ENCODE measurements at regions of chr4 and their contacts with region 1.

Region 1: DNA sequence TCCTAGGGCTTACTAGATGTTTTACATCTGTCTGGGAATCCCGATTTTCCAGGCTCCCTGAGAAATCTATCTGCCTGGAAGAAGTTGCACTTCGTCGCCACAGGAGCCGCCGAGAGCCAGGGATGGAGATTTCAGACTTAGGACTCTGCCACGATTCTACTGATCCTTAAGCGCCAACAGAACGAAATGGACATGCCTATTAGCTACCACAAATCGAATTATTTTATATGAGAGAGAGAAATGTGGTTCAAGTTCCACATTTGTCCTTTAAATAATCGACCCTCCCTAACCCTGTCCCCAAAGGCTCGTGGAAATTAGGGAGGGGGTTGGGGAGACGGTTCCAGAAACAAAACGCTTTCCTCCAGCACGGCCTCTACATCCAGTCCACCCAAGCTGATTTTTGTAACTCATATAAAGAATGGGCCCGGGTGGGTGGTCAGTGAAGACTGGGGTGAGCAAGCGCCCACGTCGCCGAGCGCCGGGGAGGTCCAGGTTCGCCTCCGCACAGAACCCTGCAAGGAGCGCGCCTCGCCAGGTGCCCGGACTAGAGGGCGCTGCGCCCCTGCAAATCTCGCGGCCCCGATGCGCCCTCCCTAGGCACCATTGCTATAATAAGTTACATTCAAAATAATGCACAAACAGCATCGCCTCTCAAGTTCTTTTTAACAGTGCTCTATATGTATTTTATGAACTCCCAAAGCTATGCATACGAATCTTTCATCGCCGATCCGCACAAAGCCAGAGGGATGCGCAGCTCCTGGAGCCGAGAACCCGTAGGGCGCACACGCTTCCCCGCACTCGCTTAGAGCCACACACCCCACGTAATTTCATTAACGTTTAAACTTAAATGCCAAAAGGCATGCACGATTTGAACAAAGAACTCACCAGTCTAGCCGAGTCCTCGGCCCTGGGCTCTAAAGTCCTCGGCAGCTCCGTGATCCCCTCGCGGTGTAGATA is 2.1 kb upstream of the FAT1 start:
- DNase-seq: peak; percentile 83
- H3K4me3 Mint-ChIP-seq: peak overlapping the region; percentile 93
- H3K27ac Mint-ChIP-seq: peak overlapping the region; percentile 93
- H3K4me1 Mint-ChIP-seq: peaks cover 30% of the 10 kb centered on the region
- H3K27me3 Mint-ChIP-seq: no peaks in the 10 kb centered on the region
- CTCF ChIP-seq: peak; percentile 75

Region 2: DNA sequence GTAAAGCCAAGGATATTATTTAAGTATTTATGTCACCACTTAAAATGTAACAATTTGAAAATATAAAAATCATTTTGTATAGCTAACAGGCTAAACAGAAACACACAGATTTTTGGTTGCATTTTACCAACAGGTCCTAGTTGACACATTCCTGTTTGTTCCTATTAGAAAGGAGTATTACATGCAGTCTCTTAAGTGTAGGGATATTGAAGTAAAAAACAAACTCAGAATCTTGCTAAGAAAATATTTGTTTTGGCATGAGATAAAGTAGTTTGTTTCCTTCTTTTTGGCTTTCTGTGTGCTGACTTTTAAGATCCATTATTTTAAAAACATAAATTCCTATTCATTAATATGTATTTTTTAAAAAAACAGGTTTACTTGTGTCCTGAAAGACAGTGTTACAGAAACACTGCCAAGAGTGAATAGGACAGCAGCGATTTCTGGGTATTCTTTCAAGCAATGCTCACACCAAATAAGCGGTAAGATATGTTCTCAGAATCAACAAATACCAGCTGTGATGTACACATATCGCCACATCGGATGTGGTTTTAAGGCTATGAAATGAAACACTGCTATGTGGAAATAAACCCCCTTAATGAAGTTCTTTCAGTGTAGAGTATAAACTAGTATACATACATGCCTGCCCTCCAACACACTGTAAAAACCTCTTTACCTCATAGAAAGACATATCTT is 452.9 kb before region 1 on chr4:
- CTCF ChIA-PET with region 1: no interaction called
- POLR2A ChIA-PET with region 1: no interaction called
- intact Hi-C with region 1: no loop called
- DNase-seq: no peak
- H3K4me3 Mint-ChIP-seq: no peak overlapping the region
- H3K27ac Mint-ChIP-seq: no peak overlapping the region
- H3K4me1 Mint-ChIP-seq: no peaks in the 10 kb centered on the region
- H3K27me3 Mint-ChIP-seq: no peaks in the 10 kb centered on the region
- CTCF ChIP-seq: no peak

Region 3: GRCh38 chr4:186283311-186283710 is 442.4 kb before region 1 on chr4:
- CTCF ChIA-PET with region 1: no interaction called
- POLR2A ChIA-PET with region 1: no interaction called
- intact Hi-C with region 1: no loop called
- DNase-seq: no peak
- H3K4me3 Mint-ChIP-seq: no peak overlapping the region
- H3K27ac Mint-ChIP-seq: no peak overlapping the region
- H3K4me1 Mint-ChIP-seq: no peaks in the 10 kb centered on the region
- H3K27me3 Mint-ChIP-seq: no peaks in the 10 kb centered on the region
- CTCF ChIP-seq: no peak

Region 4: DNA sequence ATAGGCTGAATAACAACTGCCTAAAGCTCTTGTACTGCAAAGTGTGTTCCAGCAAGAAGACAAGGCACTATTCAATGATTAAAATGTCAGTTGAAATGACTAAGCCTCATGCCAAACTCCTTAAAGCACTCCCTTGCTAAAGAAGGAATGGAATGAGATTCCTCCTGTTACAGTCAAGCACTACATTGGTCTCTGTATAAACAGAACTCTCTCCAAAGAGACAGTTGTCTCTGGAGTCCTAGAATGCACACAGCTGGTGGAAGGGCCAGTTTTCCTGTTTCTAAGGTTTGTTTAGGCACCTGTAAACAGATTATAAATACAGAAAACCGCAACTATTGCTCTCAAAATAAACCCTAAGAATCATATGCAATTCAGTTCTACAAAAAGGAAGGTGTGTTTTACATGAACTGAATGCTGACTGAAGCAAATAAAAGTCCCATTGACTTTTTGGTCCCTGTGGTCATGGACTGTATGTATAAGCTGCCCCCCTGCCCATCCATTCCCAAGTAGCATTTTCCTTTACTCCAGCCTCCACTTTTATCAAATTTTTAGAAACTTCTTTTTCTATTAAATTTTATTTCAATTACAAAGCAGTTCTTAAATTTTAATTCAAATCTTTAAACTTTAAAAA is 49.1 kb before region 1 on chr4:
- CTCF ChIA-PET with region 1: interaction called, 7 read pairs
- POLR2A ChIA-PET with region 1: interaction called, 40 read pairs
- intact Hi-C with region 1: no loop called
- DNase-seq: peak; percentile 47
- H3K4me3 Mint-ChIP-seq: no peak overlapping the region
- H3K27ac Mint-ChIP-seq: peak overlapping the region; percentile 79
- H3K4me1 Mint-ChIP-seq: peaks cover 14% of the 10 kb centered on the region
- H3K27me3 Mint-ChIP-seq: no peaks in the 10 kb centered on the region
- CTCF ChIP-seq: no peak

Region 5: DNA sequence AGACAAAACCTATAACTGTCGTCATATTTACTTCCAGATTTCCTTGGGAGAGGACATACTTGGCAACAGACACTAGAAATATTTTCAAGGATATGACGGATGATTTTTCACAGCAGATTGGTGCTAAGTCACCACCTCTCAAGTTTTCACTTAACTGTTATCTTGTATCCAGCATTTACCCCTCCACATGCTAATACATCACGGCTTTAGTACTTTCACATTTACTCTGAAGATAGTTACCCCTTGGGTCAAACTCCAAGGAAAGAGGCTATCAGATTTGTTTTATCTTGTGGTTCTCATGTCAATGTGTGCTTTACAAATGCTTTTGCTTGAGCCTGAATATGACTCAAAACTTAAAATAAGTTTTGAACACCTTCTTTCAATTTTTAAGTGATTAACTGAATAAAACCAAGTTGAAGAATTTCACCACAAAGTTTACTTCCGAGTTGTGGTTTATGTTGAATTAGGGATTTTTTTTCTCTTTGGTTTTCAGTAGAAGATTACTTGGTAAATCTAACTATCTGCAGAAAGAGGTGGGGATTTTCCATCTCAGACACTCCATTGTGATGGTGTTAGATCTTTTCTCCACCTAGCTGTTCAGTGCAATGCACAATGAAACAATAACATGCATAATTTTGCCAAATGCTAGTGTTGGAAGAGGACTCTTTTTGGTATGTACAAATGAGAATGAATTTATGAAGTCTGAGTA is 73.4 kb after region 1 on chr4:
- CTCF ChIA-PET with region 1: no interaction called
- POLR2A ChIA-PET with region 1: no interaction called
- intact Hi-C with region 1: no loop called
- DNase-seq: no peak
- H3K4me3 Mint-ChIP-seq: no peak overlapping the region
- H3K27ac Mint-ChIP-seq: no peak overlapping the region
- H3K4me1 Mint-ChIP-seq: no peaks in the 10 kb centered on the region
- H3K27me3 Mint-ChIP-seq: no peaks in the 10 kb centered on the region
- CTCF ChIP-seq: no peak

Region 6: DNA sequence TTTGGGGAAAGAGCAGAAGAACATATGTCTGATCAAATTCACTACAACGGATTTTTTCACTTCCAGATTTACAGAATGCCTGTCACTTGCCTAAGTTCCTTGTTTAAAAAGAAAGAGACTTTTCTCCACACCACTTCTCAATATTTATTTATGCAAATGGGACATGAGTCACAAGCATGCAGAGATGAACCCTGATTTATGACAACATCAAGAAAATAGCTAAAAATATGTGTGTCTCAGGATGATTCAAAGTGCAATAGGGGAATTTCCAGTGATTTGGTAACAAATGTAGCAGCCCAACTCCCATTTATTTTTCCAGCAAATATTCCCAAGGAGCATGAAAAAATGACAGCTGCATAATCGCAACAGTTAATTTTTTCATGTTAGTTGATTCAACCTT is 178.4 kb after region 1 on chr4:
- CTCF ChIA-PET with region 1: interaction called, 3 read pairs
- POLR2A ChIA-PET with region 1: interaction called, 7 read pairs
- intact Hi-C with region 1: loop called (anchors 5 kb)
- DNase-seq: peak; percentile 78
- H3K4me3 Mint-ChIP-seq: no peak overlapping the region
- H3K27ac Mint-ChIP-seq: peak overlapping the region; percentile 36
- H3K4me1 Mint-ChIP-seq: peaks cover 22% of the 10 kb centered on the region
- H3K27me3 Mint-ChIP-seq: no peaks in the 10 kb centered on the region
- CTCF ChIP-seq: no peak

Region 7: DNA sequence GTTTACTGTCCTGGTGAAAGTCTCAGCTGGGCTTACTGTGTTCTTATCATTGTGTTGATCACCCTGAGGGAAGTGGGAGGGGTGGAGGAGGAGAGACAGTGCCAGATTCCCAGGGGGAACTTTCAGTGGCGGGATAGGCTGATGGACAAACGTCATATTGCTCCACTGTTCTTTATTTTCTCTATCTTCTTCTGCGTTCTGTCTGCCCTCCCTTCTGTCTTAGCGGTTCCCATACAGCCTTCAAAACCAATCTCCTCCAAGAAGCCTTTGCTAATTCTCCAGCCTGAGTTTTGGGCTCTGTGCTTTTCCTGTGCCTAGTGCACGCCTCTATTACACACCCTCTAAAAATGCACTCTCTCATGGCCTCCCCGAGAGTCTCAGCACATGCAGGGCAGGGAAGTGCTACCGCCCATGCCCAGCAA is 446.6 kb after region 1 on chr4:
- CTCF ChIA-PET with region 1: interaction called, 3 read pairs
- POLR2A ChIA-PET with region 1: no interaction called
- intact Hi-C with region 1: loop called (anchors 5 kb)
- DNase-seq: peak; percentile 61
- H3K4me3 Mint-ChIP-seq: peak overlapping the region; percentile 69
- H3K27ac Mint-ChIP-seq: peak overlapping the region; percentile 75
- H3K4me1 Mint-ChIP-seq: peaks cover 18% of the 10 kb centered on the region
- H3K27me3 Mint-ChIP-seq: no peaks in the 10 kb centered on the region
- CTCF ChIP-seq: no peak

Region 8: DNA sequence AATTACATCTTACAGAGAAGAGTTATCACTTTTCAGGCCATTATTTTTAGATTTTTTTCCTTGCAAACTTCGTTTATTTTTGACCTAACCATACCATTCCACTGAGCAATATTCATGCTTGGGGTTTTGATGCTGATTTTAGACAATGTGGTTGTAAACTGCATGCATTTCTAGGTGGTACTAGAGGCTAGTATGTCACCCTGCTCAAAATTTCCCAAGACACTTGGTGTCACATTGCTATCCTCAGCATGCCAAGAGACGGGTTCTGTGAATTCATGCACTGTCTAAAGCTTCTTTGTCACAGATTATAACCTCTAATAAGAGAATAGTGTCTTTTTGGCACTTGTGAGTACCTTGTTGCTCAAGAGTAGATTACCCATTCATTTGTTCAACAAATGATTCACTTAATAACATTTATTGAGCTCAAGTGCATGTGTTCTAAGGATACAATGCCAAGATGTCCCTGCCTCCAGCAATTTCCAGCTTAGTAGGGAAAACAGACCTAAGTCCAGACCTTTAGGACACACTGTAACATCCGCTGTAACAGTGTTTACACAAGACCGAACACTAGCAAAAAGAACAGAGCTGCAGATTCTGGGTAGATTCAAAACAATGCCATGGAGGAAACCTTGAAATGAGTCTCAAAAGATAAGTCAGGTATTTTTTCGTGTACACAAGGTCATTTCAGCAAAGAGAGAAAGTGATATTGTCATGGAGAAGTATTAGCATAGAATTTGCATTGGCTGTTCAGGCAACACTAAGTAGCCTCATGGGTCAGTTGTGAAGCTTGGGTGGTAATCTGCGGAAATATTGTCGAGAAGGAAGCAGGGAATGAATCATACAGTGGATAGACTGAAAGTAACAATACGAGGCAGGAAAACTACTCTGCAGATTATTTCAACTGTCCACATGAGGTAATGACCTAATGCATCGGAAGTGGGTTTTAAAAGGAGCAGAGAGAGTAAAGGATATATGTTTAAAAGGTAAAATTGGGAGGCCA is 754.7 kb after region 1 on chr4:
- CTCF ChIA-PET with region 1: interaction called, 3 read pairs
- POLR2A ChIA-PET with region 1: interaction called, 7 read pairs
- intact Hi-C with region 1: loop called (anchors 10 kb)
- DNase-seq: peak; percentile 85
- H3K4me3 Mint-ChIP-seq: peak overlapping the region; percentile 65
- H3K27ac Mint-ChIP-seq: peak overlapping the region; percentile 71
- H3K4me1 Mint-ChIP-seq: peaks cover 22% of the 10 kb centered on the region
- H3K27me3 Mint-ChIP-seq: no peaks in the 10 kb centered on the region
- CTCF ChIP-seq: no peak

Region 9: DNA sequence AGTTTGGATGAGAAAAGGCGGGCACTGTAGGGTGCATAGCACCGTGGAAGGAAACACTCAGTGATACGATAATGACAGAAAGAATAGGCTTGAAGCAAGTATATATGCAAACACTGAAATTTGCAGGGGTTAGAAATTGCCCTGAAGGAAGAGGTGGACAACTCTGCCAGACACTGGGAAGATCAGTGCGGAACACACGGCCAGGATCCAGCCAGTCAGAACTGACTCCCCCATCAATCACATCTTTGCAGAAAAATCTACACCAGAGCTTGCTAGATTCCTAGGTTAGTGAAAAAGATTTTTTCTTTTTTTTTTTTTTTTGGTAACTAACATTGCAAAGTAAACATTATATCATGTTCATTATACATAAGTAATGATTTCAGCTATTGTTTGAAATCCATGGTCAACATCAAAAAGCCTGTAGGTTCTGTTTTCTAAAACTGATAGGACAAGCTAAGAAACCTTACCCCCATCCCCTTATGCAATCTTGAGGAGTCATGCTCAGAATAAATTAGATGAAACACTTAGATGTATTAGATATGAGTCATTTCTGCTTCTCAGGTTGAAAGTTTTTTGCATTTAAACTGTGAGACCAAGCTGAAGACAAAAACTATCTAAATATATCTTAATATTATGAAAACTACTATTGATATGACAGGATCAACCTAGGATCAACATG is 1452.4 kb after region 1 on chr4:
- CTCF ChIA-PET with region 1: no interaction called
- POLR2A ChIA-PET with region 1: no interaction called
- intact Hi-C with region 1: loop called (anchors 5 kb)
- DNase-seq: peak; percentile 78
- H3K4me3 Mint-ChIP-seq: no peak overlapping the region
- H3K27ac Mint-ChIP-seq: no peak overlapping the region
- H3K4me1 Mint-ChIP-seq: peaks cover 25% of the 10 kb centered on the region
- H3K27me3 Mint-ChIP-seq: no peaks in the 10 kb centered on the region
- CTCF ChIP-seq: no peak